Natural killer cell (primary cell): ENCODE measurements at regions of chr17 and their contacts with region 1.

Region 1: DNA sequence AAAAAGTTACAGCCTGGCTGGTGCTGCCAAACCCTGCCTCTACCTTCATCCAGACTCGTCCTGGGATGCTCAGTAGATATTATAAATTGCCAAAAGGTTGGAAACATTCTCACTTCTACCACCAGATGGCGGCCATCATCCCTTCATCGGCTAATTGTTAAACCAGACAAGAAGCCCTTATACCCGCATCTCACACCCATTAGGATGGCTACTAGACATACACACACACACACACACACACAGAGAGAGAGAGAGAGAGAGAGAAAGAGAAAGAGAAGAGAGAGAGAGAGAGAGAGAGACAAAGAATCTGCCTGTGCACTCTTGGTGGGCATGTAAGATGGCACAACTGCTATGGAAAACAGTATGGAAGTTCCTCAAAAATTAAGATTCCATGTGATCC is 15.0 kb upstream of the SCIMP start:
- DNase-seq: peak; percentile 54 to 87
- ATAC-seq: peak; percentile 91 to 99 (median 98)
- H3K4me3 ChIP-seq: no peak overlapping the region
- H3K4me3 Mint-ChIP-seq: peak overlapping the region; percentile 65
- H3K27ac ChIP-seq: no peak overlapping the region
- H3K27ac Mint-ChIP-seq: peak overlapping the region; percentile 80 to 85
- H3K4me1 ChIP-seq: peaks cover 4% of the 10 kb centered on the region
- H3K4me1 Mint-ChIP-seq: peaks cover 6 to 12% of the 10 kb centered on the region in 2 donors
- H3K27me3 ChIP-seq: no peaks in the 10 kb centered on the region
- H3K27me3 Mint-ChIP-seq: peaks cover 0 to 3% of the 10 kb centered on the region in 2 donors
- CTCF ChIP-seq: peak; percentile 68

Region 2: GRCh38 chr17:5304636-5305035 is 55.0 kb after region 1 on chr17:
- intact Hi-C with region 1: loop called (anchors 10 kb)
- DNase-seq: no peak
- ATAC-seq: no peak
- H3K4me3 ChIP-seq: no peak overlapping the region
- H3K4me3 Mint-ChIP-seq: no peak overlapping the region
- H3K27ac ChIP-seq: no peak overlapping the region
- H3K27ac Mint-ChIP-seq: peak overlapping the region in 1 of 2 donors; percentile 23
- H3K4me1 ChIP-seq: peaks cover 5% of the 10 kb centered on the region
- H3K4me1 Mint-ChIP-seq: peaks cover 38 to 66% of the 10 kb centered on the region in 2 donors
- H3K27me3 ChIP-seq: no peaks in the 10 kb centered on the region
- H3K27me3 Mint-ChIP-seq: no peaks in the 10 kb centered on the region
- CTCF ChIP-seq: no peak

Region 3: DNA sequence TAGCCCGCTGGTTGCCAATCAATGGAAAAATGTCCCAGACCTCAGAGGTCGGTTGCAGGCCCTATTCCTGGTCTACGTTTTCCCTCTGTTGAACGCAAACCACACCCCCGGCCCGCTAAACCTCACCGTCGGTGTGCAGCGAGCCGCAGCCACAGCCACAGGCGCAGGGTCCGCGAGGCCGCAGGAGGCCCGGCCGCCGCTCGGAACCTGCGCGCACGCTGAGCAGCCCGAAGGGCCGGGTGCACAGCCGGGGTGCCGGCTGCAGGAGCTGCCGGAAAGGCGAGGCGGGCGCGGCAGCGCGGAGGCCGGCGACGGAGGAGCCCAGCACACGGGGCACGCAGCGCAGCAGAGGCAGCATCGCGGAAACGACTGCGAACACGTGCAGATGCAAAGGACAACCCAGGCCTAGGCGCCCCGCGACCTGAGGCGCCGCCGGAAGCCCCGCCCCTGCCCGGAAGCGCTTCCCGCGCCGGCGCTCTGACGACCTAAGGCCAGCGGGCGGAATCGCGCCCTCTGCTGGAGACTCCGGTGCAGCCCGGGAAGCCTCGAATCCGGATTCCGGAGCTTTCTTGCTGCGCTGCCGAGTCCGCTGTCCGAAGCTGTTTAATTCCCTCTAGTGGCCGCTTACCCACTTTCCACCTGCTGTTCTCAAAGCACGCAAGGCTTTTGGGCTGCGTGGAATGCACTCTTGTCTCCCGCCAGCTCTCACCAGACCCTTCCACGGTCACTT is 189.3 kb after region 1 on chr17 and contains the start of gene C1QBP:
- intact Hi-C with region 1: loop called (anchors 1 kb)
- DNase-seq: peak; percentile 95 to 97
- ATAC-seq: peak; percentile 93 to 98 (median 95)
- H3K4me3 ChIP-seq: peak within 1 kb of the TSS; percentile 51
- H3K4me3 Mint-ChIP-seq: peak within 1 kb of the TSS; percentile 81
- H3K27ac ChIP-seq: peak within 1 kb of the TSS; percentile 70
- H3K27ac Mint-ChIP-seq: peak within 1 kb of the TSS; percentile 81 to 92
- H3K4me1 ChIP-seq: peaks cover 13% of the 10 kb centered on the region
- H3K4me1 Mint-ChIP-seq: peaks cover 19 to 27% of the 10 kb centered on the region in 2 donors
- H3K27me3 ChIP-seq: no peaks in the 10 kb centered on the region
- H3K27me3 Mint-ChIP-seq: no peaks in the 10 kb centered on the region
- CTCF ChIP-seq: peak; percentile 97
- total RNA-seq, gene C1QBP: 38.1 to 40.8 (median 40.0) TPM